ENCODE measurements at regions of chr3 and their contacts with region 1.

Region 1: DNA sequence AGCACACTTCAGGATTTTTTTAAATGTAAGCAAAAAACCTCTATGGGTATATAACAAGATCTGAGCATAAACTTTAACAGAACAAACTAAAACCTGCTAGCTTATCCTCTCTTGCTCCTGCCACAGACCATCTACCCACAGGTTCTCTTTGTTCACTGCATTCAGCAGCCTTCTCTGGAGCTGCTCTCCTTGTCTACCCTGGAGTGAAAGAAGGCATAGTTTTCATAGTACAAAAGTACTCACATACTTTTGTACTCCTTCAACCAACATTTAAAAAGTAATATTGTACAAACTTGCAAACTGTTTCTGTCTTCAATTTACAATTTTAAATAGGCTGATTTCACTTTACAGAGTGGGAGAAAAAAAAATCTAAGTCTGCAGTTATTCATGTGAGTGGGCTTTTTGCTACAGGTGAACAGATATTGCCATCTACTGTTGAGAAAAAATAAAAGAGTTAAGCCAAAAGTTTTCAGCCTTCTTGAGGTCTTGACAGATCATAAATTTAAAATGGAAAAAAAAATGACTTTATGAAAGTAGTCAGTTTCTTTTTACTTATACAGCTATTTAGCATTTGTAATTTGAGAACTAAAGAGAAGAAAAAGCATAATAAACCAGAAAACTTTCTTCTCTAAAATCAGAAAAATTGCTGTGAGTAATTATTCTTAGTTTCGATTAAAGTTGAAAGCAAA is 20.4 kb downstream of the TERC start:
- DNase-seq: no peak
- ATAC-seq: no peak
- H3K4me3 ChIP-seq: no peak overlapping the region
- H3K4me3 Mint-ChIP-seq: no peak overlapping the region
- H3K27ac ChIP-seq: no peak overlapping the region
- H3K27ac Mint-ChIP-seq: no peak overlapping the region
- H3K4me1 ChIP-seq: no peaks in the 10 kb centered on the region
- H3K4me1 Mint-ChIP-seq: peaks cover 4% of the 10 kb centered on the region
- H3K27me3 ChIP-seq: peaks cover 5 to 6% of the 10 kb centered on the region in 2 experiments
- H3K27me3 Mint-ChIP-seq: peaks cover 33% of the 10 kb centered on the region
- CTCF ChIP-seq: peak; percentile 39

Region 2: GRCh38 chr3:168047190-168047795 is 1697.2 kb before region 1 on chr3:
- CTCF ChIA-PET with region 1: no interaction called
- POLR2A ChIA-PET with region 1: no interaction called
- intact Hi-C with region 1: loop called in 1 of 2 experiments (anchors 10 kb)
- DNase-seq: peak in 3 of 14 experiments; percentile 34 to 54 (median 52)
- ATAC-seq: peak; percentile 51
- H3K4me3 ChIP-seq: no peak overlapping the region
- H3K4me3 Mint-ChIP-seq: no peak overlapping the region
- H3K27ac ChIP-seq: no peak overlapping the region
- H3K27ac Mint-ChIP-seq: no peak overlapping the region
- H3K4me1 ChIP-seq: no peaks in the 10 kb centered on the region
- H3K4me1 Mint-ChIP-seq: no peaks in the 10 kb centered on the region
- H3K27me3 ChIP-seq: no peaks in the 10 kb centered on the region
- H3K27me3 Mint-ChIP-seq: no peaks in the 10 kb centered on the region
- CTCF ChIP-seq: peak; percentile 32

Region 3: DNA sequence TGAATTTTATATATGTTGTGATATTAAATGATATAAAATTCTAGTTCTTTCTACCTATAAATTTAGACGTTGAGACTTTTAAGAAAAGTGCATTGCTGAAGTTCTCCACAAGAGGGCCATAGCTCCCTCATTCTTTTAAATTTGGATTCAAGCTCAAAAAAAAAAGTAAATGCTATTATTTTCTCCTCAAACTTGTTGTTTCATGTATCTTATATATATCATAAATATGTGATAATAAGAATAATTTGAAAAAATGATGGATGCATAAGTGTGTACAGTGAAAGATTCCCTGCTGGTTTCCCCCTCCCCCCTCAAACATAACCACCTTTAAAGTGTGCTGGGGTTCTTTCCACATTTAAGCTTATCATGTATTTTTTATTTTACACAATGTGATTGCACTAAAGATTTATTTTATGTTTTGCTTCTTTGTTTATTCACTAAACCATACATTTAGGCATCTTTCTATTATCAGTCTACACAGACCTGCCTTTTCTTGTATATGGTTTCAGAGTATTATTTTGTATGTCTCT is 879.4 kb before region 1 on chr3:
- CTCF ChIA-PET with region 1: no interaction called
- POLR2A ChIA-PET with region 1: no interaction called
- intact Hi-C with region 1: loop called in 1 of 2 experiments (anchors 10 kb)
- DNase-seq: no peak
- ATAC-seq: no peak
- H3K4me3 ChIP-seq: no peak overlapping the region
- H3K4me3 Mint-ChIP-seq: no peak overlapping the region
- H3K27ac ChIP-seq: no peak overlapping the region
- H3K27ac Mint-ChIP-seq: no peak overlapping the region
- H3K4me1 ChIP-seq: no peaks in the 10 kb centered on the region
- H3K4me1 Mint-ChIP-seq: no peaks in the 10 kb centered on the region
- H3K27me3 ChIP-seq: no peaks in the 10 kb centered on the region
- H3K27me3 Mint-ChIP-seq: no peaks in the 10 kb centered on the region
- CTCF ChIP-seq: peak; percentile 54

Region 4: DNA sequence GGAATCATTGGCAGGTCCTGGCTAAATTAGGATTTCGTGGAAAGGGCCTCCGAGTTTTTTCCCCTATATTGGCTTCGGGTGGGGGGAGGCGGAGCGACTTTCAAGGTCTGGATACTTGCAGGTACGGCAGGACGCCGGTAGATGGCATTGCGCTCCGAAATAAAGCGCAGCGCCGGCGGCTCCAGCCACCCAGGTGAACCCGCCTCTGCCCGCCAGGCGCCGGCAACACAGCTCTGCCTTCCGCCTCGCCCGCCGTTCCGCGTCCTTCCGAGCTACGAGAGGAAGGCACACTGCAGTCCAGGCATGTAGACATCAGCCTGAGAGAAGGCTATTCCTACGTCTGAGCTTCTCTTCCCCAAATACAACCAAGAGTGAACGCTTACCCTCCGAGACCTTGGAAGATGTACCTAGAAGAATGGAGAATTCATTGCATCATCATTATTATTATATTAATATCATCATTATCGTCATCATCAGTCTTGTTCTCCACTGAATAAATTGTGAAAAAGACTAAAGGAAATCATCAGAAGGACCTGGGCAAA is 595.1 kb before region 1 on chr3:
- CTCF ChIA-PET with region 1: no interaction called
- POLR2A ChIA-PET with region 1: no interaction called
- intact Hi-C with region 1: loop called in 1 of 2 experiments (anchors 5 kb)
- DNase-seq: peak; percentile 32 to 75 (median 50)
- ATAC-seq: peak; percentile 92
- H3K4me3 ChIP-seq: no peak overlapping the region
- H3K4me3 Mint-ChIP-seq: no peak overlapping the region
- H3K27ac ChIP-seq: no peak overlapping the region
- H3K27ac Mint-ChIP-seq: no peak overlapping the region
- H3K4me1 ChIP-seq: peaks cover 24% of the 10 kb centered on the region
- H3K4me1 Mint-ChIP-seq: peaks cover 25% of the 10 kb centered on the region
- H3K27me3 ChIP-seq: peaks cover 39 to 69% of the 10 kb centered on the region in 2 experiments
- H3K27me3 Mint-ChIP-seq: peaks cover 87% of the 10 kb centered on the region
- CTCF ChIP-seq: peak; percentile 65

Region 5: GRCh38 chr3:169542331-169542751 is 202.2 kb before region 1 on chr3:
- CTCF ChIA-PET with region 1: no interaction called
- POLR2A ChIA-PET with region 1: no interaction called
- intact Hi-C with region 1: no loop called
- DNase-seq: no peak
- ATAC-seq: no peak
- H3K4me3 ChIP-seq: no peak overlapping the region
- H3K4me3 Mint-ChIP-seq: no peak overlapping the region
- H3K27ac ChIP-seq: no peak overlapping the region
- H3K27ac Mint-ChIP-seq: no peak overlapping the region
- H3K4me1 ChIP-seq: no peaks in the 10 kb centered on the region
- H3K4me1 Mint-ChIP-seq: no peaks in the 10 kb centered on the region
- H3K27me3 ChIP-seq: peaks cover 0 to 4% of the 10 kb centered on the region in 2 experiments
- H3K27me3 Mint-ChIP-seq: no peaks in the 10 kb centered on the region
- CTCF ChIP-seq: no peak

Region 6: DNA sequence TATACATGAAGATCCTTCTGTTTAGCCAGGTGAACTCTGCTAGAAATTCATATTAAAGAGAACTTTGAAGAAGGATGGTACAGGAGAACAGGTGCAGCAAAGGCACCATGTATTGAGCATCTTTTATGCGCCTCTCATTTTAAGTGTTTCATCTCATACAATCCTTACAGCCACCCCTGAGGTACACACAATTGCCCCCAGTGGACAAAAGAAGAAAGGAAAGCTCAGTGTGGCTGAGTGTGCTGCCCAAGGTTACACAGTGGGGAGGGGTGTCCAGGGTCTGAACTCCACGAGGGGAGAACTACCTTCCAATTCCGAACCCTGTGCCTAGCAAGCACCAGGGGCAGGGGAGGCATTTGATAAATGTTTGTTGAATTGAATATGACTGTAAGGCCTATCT is 179.6 kb before region 1 on chr3:
- CTCF ChIA-PET with region 1: no interaction called
- POLR2A ChIA-PET with region 1: no interaction called
- intact Hi-C with region 1: loop called in 1 of 2 experiments (anchors 5 kb)
- DNase-seq: no peak
- ATAC-seq: no peak
- H3K4me3 ChIP-seq: no peak overlapping the region
- H3K4me3 Mint-ChIP-seq: no peak overlapping the region
- H3K27ac ChIP-seq: no peak overlapping the region
- H3K27ac Mint-ChIP-seq: no peak overlapping the region
- H3K4me1 ChIP-seq: no peaks in the 10 kb centered on the region
- H3K4me1 Mint-ChIP-seq: no peaks in the 10 kb centered on the region
- H3K27me3 ChIP-seq: no peaks in the 10 kb centered on the region
- H3K27me3 Mint-ChIP-seq: peaks cover 13% of the 10 kb centered on the region
- CTCF ChIP-seq: no peak

Region 7: DNA sequence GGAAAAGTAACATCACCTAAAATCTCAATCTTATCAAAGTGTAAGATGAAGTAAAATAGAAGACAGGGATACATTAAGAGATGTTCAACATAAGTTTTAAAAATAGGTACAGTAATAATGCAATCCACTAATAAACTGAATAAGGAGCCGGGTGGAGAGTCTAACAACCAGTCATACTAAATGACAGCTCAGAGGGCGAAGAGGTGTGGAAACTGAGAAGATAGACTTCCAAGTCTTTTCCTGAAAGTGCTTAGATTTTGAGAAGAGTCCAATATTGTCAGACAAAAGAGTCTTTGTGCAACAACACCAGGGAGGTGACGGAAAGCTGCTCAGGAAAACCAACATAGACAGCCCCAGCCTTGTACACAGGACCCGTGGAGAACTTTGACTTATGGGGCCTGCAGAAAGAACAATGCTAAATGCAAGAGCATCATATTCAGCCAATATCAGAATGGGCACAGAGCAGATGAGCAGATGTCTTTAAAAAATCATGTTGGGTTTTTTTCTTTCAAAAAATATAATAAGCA is 147.4 kb before region 1 on chr3:
- CTCF ChIA-PET with region 1: no interaction called
- POLR2A ChIA-PET with region 1: no interaction called
- intact Hi-C with region 1: no loop called
- DNase-seq: no peak
- ATAC-seq: no peak
- H3K4me3 ChIP-seq: no peak overlapping the region
- H3K4me3 Mint-ChIP-seq: no peak overlapping the region
- H3K27ac ChIP-seq: no peak overlapping the region
- H3K27ac Mint-ChIP-seq: no peak overlapping the region
- H3K4me1 ChIP-seq: no peaks in the 10 kb centered on the region
- H3K4me1 Mint-ChIP-seq: no peaks in the 10 kb centered on the region
- H3K27me3 ChIP-seq: no peaks in the 10 kb centered on the region
- H3K27me3 Mint-ChIP-seq: peaks cover 9% of the 10 kb centered on the region
- CTCF ChIP-seq: no peak

Measured in CD4-positive, alpha-beta T cell (primary cell).